SK-N-SH (cell line): ENCODE measurements at regions of chr3 and their contacts with region 1.

Region 1: GRCh38 chr3:81242871-81243270 is 518.6 kb downstream of the GBE1 start:
- DNase-seq: peak; percentile 13
- H3K4me3 ChIP-seq: no peak overlapping the region
- H3K27ac ChIP-seq: no peak overlapping the region
- H3K4me1 ChIP-seq: no peaks in the 10 kb centered on the region
- H3K27me3 ChIP-seq: no peaks in the 10 kb centered on the region
- CTCF ChIP-seq: peak; percentile 69
- EP300 ChIP-seq: no peak
- RAD21 ChIP-seq: peak; percentile 67

Region 2: DNA sequence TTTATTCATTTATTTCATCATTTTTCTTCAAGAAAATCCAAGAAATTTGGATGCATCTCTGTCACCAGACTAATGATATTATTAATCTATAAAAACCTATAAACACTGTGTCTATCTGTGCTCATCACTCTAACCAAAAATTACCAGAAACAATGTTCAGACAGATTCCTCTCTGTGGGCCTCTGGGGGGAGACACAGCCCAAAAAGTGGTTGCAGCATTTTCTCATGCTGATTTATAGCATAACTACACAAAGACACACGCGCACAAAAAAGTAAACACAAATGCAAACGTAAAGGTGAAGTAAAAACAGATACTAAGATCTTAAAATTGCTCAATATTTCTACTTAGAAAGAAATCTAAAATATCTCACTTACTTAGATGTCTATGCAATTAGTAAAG is 457.4 kb before region 1 on chr3:
- CTCF ChIA-PET with region 1: interaction called, 10 read pairs
- POLR2A ChIA-PET with region 1: no interaction called
- DNase-seq: peak; percentile 34
- H3K4me3 ChIP-seq: no peak overlapping the region
- H3K27ac ChIP-seq: no peak overlapping the region
- H3K4me1 ChIP-seq: no peaks in the 10 kb centered on the region
- H3K27me3 ChIP-seq: no peaks in the 10 kb centered on the region
- CTCF ChIP-seq: peak; percentile 38
- EP300 ChIP-seq: no peak
- RAD21 ChIP-seq: peak; percentile 79